Endothelial cell of umbilical vein (primary cell): ENCODE measurements at regions of chr3 and their contacts with region 1.

Region 1: DNA sequence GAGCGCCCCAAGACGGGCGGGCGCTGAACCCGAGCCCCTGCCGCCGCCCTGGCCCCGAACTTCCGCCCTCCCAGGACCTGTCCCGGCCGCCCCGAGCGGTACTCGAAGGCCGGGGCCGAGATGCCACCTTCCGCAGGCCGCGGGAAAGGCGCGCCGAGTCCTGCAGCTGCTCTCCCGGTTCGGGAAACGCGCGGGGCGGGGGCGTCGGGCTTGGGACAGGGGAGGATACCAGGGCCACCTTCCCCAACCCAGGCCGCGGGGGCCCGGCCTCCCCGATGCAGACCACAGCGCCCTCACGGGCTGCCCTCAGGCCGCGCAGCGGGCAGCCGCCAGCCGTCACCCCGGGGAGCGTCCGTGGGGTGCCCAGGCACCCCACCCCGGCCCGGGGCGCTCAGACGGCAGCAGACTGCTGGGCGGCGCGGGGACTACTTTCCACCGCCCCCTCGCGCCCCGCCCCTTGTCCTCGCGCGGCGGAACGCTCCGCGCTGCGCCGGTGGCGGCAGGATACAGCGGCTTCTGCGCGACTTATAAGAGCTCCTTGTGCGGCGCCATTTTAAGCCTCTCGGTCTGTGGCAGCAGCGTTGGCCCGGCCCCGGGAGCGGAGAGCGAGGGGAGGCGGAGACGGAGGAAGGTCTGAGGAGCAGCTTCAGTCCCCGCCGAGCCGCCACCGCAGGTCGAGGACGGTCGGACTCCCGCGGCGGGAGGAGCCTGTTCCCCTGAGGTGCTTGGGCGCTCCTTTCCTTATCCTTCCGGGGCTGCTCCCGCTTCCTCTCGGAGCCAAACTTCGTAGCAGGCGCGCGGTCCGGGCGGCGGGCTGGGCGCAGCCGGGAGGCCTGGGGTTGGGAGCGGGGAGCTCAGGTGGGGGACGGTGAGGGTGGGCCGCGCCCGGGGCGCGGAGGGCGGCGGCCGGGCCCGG is at the start of gene CTNNB1:
- DNase-seq: peak; percentile 91
- H3K4me3 ChIP-seq: peak within 1 kb of the TSS; percentile 35 to 90 (median 83)
- H3K27ac ChIP-seq: peak within 1 kb of the TSS; percentile 79
- H3K4me1 ChIP-seq: peaks cover 18% of the 10 kb centered on the region
- H3K27me3 ChIP-seq: peaks cover 2 to 6% of the 10 kb centered on the region in 2 experiments
- CTCF ChIP-seq: no peak
- POLR2A ChIP-seq: peak; percentile 95
- total RNA-seq, gene CTNNB1: 513 and 566 TPM in 2 replicates

Region 2: GRCh38 chr3:40452876-40453730 is 746.1 kb before region 1 on chr3:
- CTCF ChIA-PET with region 1: no interaction called
- POLR2A ChIA-PET with region 1: interaction called, 3 read pairs
- dilution Hi-C with region 1: no loop called
- intact Hi-C with region 1: loop called (anchors 1 kb)
- DNase-seq: peak; percentile 99
- H3K4me3 ChIP-seq: peak overlapping the region; percentile 42 to 82 (median 73)
- H3K27ac ChIP-seq: peak overlapping the region; percentile 50
- H3K4me1 ChIP-seq: peaks cover 8% of the 10 kb centered on the region
- H3K27me3 ChIP-seq: no peaks in the 10 kb centered on the region
- CTCF ChIP-seq: no peak
- POLR2A ChIP-seq: peak; percentile 89

Region 3: DNA sequence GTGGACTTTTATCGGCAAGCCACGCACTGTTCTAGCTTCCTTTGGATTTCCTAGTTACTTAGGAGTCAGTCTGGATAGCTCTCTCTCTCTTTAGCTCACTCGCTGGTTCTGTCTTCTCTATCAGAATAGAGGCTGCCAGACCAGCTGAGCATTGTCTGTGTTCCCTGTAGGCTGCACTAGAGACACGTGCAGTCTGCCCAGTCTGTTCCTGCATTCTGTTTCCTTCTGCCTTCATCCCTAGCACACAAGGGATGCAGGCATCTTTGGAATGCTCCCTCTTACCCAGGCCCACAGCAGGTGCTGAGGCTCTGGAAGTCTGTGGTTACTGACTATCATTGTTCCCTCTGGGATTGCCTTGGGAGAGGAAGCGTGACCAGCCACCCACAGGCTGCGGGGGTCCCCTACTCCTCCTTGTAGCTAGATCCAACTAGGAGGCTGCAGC is 351.6 kb before region 1 on chr3:
- CTCF ChIA-PET with region 1: no interaction called
- POLR2A ChIA-PET with region 1: interaction called, 4 read pairs
- dilution Hi-C with region 1: no loop called
- intact Hi-C with region 1: loop called (anchors 2 kb)
- DNase-seq: peak; percentile 73
- H3K4me3 ChIP-seq: no peak overlapping the region
- H3K27ac ChIP-seq: no peak overlapping the region
- H3K4me1 ChIP-seq: no peaks in the 10 kb centered on the region
- H3K27me3 ChIP-seq: peaks cover 0 to 4% of the 10 kb centered on the region in 2 experiments
- CTCF ChIP-seq: peak in 1 of 2 donors; percentile 39
- POLR2A ChIP-seq: no peak

Region 4: DNA sequence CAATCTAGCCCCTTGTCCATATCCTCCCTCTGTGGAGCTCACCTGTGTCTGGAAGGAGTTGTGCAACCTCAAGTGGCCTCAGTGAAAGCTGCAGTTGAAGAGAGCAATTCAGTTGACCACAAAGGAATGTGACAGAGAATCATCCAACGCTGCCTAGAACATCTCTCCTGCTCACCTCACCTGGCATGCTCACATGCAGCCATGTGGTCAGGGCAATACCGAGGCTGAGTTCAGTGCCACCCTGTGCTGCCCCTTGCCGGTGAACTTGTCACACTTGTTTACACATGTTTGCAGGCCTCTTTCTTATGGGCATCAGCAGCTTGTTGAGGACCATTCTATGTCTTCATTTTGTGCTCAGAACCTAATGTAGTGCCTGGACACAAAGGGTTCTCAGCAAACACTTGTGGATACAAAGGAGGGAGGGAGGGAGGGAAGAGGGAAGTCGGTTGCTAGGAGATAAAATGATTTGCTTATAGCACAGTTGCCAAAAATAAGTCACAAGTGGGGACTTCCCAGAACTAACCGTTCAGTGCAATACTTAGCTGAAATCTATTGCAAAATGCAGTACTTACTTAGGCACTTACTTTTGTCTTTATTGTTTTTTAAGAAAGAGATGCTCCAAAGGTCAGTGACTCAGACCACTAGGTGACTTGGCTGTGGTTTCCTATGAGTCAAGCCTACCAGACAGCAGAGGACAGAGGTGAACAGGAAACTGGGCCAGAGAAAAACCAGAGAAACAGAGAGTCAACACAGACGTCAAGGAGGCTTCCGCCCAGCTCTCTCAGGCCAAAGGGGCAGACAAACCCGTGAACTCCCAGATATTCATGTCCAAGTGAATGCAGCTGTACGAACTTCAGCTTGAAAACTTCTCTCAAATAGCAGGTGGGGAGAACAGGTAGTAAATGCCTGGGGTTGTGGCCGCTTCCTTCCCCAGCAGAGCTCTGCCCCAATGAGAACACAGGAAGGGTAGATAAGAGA is 227.7 kb before region 1 on chr3:
- CTCF ChIA-PET with region 1: interaction called, 4 read pairs
- POLR2A ChIA-PET with region 1: interaction called, 8 read pairs
- dilution Hi-C with region 1: no loop called
- intact Hi-C with region 1: loop called (anchors 1 kb)
- DNase-seq: peak; percentile 99
- H3K4me3 ChIP-seq: no peak overlapping the region
- H3K27ac ChIP-seq: peak overlapping the region; percentile 91
- H3K4me1 ChIP-seq: peaks cover 57% of the 10 kb centered on the region
- H3K27me3 ChIP-seq: no peaks in the 10 kb centered on the region
- CTCF ChIP-seq: no peak
- POLR2A ChIP-seq: peak; percentile 31

Region 5: DNA sequence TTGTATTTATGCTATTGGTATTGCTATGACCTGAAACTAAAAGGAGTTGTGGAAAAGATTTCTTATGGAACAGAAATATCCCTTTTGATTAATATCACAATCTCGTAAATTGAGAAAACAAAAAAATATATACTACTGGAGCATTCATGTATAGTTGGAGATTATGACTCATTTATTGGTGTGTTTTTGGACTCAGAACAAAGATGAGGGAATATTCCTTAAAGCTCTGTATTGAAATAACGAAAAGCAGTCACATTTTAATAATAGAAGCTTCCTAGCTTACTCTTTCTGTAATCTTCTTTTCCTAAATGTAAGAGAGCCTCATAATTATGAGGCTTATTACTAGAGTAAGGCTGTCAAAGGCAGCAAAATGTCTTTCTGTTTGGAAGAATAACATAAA is 14.4 kb after region 1 on chr3:
- CTCF ChIA-PET with region 1: interaction called, 6 read pairs
- POLR2A ChIA-PET with region 1: interaction called, 12 read pairs
- dilution Hi-C with region 1: no loop called
- intact Hi-C with region 1: no loop called
- DNase-seq: peak; percentile 18
- H3K4me3 ChIP-seq: no peak overlapping the region
- H3K27ac ChIP-seq: no peak overlapping the region
- H3K4me1 ChIP-seq: peaks cover 20% of the 10 kb centered on the region
- H3K27me3 ChIP-seq: no peaks in the 10 kb centered on the region
- CTCF ChIP-seq: no peak
- POLR2A ChIP-seq: no peak

Region 6: DNA sequence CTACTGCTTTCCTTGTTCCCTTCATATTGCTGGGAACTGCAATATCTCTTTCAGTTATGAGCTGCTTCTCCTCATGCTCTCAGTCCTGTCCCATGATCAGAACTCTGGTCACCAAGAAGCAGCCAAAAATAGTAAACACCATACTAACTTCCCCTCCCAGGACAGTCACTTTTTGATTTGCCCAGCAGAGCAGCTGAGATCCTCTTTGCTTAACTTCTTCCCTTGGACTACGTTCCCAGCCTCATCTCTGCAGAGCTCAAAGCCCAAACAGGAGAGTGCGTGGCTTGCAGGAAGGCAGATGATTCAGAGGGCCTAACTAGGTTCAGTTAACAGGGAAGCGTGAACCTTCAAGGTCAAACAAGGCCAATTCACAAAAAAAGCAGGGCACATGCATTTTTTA is 153.3 kb after region 1 on chr3:
- CTCF ChIA-PET with region 1: no interaction called
- POLR2A ChIA-PET with region 1: no interaction called
- dilution Hi-C with region 1: no loop called
- intact Hi-C with region 1: no loop called
- DNase-seq: no peak
- H3K4me3 ChIP-seq: no peak overlapping the region
- H3K27ac ChIP-seq: no peak overlapping the region
- H3K4me1 ChIP-seq: no peaks in the 10 kb centered on the region
- H3K27me3 ChIP-seq: no peaks in the 10 kb centered on the region
- CTCF ChIP-seq: no peak
- POLR2A ChIP-seq: no peak

Region 7: GRCh38 chr3:41819226-41819625 is 620.0 kb after region 1 on chr3:
- CTCF ChIA-PET with region 1: no interaction called
- POLR2A ChIA-PET with region 1: no interaction called
- dilution Hi-C with region 1: no loop called
- intact Hi-C with region 1: no loop called
- DNase-seq: no peak
- H3K4me3 ChIP-seq: no peak overlapping the region
- H3K27ac ChIP-seq: no peak overlapping the region
- H3K4me1 ChIP-seq: no peaks in the 10 kb centered on the region
- H3K27me3 ChIP-seq: no peaks in the 10 kb centered on the region
- CTCF ChIP-seq: no peak
- POLR2A ChIP-seq: no peak

Region 8: DNA sequence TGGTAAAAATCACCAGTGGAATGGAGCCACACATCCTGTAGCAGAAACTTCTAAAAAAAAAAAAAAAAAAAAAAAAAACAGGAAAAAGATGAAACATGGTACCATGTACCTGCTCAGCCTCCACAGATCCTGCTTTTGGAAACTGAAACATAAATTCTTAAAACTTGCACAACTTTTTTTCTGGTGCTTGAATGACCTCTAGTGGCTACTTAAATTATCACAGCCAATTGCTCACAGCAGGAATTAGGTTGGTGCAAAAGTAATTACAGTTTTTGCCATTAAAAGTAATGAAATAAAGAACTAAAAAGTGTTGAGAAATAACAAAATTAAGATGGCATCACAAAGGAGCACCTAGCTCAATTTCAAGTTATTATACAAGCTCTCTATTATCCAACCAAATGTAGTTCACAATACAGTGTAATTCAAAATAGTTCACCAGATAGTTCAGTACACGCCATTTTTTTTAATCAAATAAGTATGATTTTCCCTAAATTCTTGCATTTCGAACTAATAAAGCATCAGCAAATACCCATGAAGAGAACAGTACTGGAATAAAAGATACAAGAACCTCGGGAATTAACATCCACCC is 682.1 kb after region 1 on chr3:
- CTCF ChIA-PET with region 1: no interaction called
- POLR2A ChIA-PET with region 1: no interaction called
- dilution Hi-C with region 1: no loop called
- intact Hi-C with region 1: loop called (anchors 5 kb)
- DNase-seq: peak; percentile 60
- H3K4me3 ChIP-seq: no peak overlapping the region
- H3K27ac ChIP-seq: no peak overlapping the region
- H3K4me1 ChIP-seq: no peaks in the 10 kb centered on the region
- H3K27me3 ChIP-seq: no peaks in the 10 kb centered on the region
- CTCF ChIP-seq: peak; percentile 13 to 28
- POLR2A ChIP-seq: no peak